ENCODE measurements at regions of chr17 and their contacts with region 1.

Region 1: GRCh38 chr17:7687908-7688807 is at the start of gene WRAP53:
- DNase-seq: peak; percentile 99
- H3K4me3 ChIP-seq: peak within 1 kb of the TSS; percentile 66 to 77
- H3K27ac ChIP-seq: peak within 1 kb of the TSS; percentile 90 to 93
- H3K4me1 ChIP-seq: peaks cover 9% of the 10 kb centered on the region
- H3K27me3 ChIP-seq: no peaks in the 10 kb centered on the region
- CTCF ChIP-seq: peak; percentile 90 to 100 (median 100)
- POLR2A ChIP-seq: peak; percentile 23
- total RNA-seq, gene WRAP53: 8.6 to 9.4 TPM

Region 2: DNA sequence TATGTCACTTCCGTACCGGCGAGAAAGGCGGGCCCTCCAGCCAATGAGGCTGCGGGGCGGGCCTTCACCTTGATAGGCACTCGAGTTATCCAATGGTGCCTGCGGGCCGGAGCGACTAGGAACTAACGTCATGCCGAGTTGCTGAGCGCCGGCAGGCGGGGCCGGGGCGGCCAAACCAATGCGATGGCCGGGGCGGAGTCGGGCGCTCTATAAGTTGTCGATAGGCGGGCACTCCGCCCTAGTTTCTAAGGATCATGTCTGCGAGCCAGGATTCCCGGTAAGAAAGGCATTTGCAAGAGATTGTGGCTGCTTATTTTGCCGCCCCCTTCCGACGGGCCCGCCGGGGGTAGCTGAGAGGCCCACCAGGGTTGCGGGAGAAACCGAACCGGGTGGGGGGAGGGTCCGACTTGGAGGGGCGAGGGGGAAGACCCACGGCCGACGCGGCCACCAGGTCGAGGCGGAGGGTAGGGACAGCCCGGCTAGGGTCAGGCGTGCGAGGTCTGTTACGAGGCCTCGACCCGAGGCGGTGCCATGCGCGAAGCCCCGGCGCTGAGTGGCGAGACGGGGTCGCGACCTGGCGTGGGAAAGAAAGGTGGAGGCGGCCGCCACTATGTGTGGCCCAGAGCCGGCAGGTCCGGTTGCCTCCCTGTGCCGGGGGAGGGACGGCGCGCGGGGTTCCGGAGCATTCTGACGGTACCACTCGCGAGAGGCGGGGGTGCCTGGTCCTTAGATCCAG is 115.4 kb before region 1 on chr17:
- intact Hi-C with region 1: loop called (anchors 5 kb)
- DNase-seq: peak; percentile 100
- H3K4me3 ChIP-seq: peak overlapping the region; percentile 99 to 100
- H3K27ac ChIP-seq: peak overlapping the region; percentile 98
- H3K4me1 ChIP-seq: no peaks in the 10 kb centered on the region
- H3K27me3 ChIP-seq: no peaks in the 10 kb centered on the region
- CTCF ChIP-seq: peak in 1 of 4 experiments; percentile 62
- POLR2A ChIP-seq: peak; percentile 98

Region 3: DNA sequence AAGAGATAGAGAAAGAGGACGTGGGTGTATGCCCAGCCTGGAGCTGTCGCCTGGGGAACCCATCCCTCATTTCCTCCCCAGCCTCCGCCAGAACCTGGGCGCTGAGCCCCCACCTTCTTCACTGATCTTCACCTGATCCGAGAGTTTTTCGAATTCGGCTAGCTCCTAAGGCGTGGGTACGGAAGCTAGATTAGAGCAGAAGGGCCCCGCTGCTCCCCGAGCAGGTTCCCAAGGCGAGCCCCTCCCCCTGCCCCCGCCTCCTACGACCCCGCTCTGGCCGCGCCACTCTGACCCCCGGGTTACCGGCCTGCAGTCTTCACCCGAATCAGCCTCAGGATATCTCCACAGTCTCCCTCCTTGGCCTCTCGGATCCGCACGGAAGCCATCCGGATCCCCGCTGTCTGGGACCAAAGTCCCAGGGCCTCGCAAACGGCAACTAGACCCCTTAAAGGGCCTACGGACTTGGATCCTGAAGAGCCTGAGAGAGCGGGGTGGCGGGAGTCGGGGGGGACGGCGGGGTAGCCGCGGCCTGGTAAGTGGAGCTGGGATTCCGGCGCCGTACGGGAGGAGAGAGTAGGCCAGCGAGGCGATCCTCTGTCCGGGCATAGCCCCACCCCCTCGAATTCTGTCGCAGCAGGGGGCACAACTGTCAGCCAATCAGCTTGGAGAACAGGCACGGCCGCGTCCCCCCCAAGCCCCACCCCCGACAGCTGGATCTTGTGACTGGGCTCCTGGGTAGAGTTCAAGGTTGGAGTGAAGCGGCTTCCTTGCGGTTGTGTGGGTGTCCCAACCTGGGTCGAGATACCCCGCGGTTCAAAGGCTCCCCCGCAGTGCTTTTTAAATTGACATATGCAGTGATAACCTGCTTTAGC is 60.7 kb before region 1 on chr17 and contains the start of gene SAT2:
- intact Hi-C with region 1: loop called (anchors 5 kb)
- DNase-seq: peak; percentile 94
- H3K4me3 ChIP-seq: peak within 1 kb of the TSS; percentile 87 to 94
- H3K27ac ChIP-seq: peak within 1 kb of the TSS; percentile 97 to 98
- H3K4me1 ChIP-seq: no peaks in the 10 kb centered on the region
- H3K27me3 ChIP-seq: no peaks in the 10 kb centered on the region
- CTCF ChIP-seq: no peak
- POLR2A ChIP-seq: peak; percentile 88
- total RNA-seq, gene SAT2: 83.3 to 139 TPM

Region 4: DNA sequence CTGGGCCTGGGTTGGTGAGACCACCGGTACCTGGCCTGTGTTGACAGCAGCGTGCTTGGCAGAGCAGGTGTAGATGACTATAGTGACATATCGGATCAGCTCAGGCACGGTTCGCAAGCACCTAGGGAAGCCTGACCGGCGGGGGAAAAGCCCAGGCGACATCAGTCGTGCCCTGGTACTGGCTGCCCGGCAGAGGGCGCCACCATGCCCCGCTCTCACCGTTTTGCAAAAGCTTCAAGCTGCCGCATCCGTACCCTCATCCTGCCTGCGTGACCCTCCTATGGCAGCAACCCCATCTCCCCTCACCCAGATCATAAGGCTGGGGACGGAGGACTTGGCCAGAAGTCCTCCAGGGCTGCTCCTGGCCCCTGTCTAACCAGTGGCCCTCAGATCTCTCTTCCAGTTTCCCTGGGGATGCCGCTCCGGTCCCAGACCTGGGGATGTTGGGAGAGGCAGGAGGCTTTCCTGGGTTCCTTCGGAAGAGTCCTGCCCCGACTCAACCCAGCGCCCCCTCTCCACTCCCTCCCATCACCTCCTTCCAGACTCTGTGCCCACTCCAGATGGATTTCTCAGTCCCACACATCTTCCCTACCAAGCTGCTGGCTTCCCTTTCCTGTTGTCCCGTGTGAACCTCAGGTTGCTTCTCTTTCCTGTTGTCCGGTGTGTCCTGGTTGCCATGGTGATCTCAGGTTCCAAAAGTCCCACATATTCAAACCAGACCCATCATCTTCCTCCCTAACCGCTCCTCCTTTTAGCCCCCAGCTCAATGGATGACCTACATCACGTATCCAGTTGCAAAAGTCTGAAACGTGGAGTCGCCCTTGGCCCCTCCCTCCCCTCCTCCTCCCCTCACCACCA is 385.7 kb after region 1 on chr17:
- intact Hi-C with region 1: no loop called
- DNase-seq: no peak
- H3K4me3 ChIP-seq: no peak overlapping the region
- H3K27ac ChIP-seq: no peak overlapping the region
- H3K4me1 ChIP-seq: no peaks in the 10 kb centered on the region
- H3K27me3 ChIP-seq: no peaks in the 10 kb centered on the region
- CTCF ChIP-seq: peak; percentile 61 to 85 (median 80)
- POLR2A ChIP-seq: no peak

Measured in prostate gland (tissue), 2 donors.